ENCODE measurements at regions of chr2 and their contacts with region 1.

Region 1: DNA sequence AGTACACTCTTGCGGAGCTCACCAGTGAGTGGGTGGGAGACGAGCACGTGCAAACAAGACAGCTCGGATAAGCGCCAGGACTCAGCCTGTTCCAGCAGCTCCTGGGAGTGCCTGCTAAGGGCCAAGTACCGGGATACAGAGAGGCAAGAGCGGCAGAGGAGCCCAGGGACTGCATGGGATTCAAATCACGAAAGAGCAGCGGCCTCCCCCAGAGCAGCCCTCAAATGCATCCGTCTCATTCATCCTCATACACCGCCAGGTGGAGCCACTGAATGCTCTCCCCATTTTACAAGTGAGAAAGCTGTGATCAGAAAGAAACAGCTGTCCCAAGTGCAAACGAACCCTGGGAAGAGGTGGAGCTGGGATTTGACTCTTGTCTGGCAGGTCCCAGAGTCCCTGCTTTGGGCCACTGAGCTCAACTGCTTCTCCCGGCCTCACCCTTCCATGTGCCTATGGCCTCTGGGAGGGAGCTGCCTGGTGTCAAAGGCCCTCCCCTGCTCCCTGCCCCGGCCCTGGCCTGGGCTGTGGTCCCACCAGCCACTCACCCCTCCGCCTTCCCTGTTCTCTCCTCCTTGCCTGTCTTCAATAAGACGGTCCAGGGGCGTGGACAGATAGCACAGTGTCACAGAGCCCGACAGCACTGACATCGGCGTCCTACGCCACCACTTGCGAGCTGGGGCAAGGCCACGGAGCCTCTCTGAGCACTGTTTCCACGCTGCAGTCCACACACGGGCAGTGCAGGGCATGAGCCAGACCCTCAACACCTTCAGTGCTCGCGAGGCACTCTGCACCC is 72.8 kb upstream of the TAF1B start:
- DNase-seq: peak; percentile 65 to 84 (median 70)
- ATAC-seq: peak; percentile 38 to 60 (median 48)
- H3K4me3 ChIP-seq: peak overlapping the region in 4 of 12 donors; percentile 14 to 28 (median 20)
- H3K27ac ChIP-seq: peak overlapping the region in 10 of 12 donors; percentile 11 to 78 (median 74)
- H3K4me1 ChIP-seq: peaks cover 0 to 56% (median 23%) of the 10 kb centered on the region in 12 donors
- H3K27me3 ChIP-seq: no peaks in the 10 kb centered on the region
- CTCF ChIP-seq: peak; percentile 56 to 80 (median 72)
- POLR2A ChIP-seq: no peak

Region 2: GRCh38 chr2:8893978-8894820 is 876.3 kb before region 1 on chr2:
- intact Hi-C with region 1: no loop called
- DNase-seq: no peak
- ATAC-seq: no peak
- H3K4me3 ChIP-seq: no peak overlapping the region
- H3K27ac ChIP-seq: no peak overlapping the region
- H3K4me1 ChIP-seq: no peaks in the 10 kb centered on the region
- H3K27me3 ChIP-seq: no peaks in the 10 kb centered on the region
- CTCF ChIP-seq: no peak
- POLR2A ChIP-seq: no peak

Region 3: GRCh38 chr2:9474361-9474967 is 296.0 kb before region 1 on chr2 and contains the start of gene IAH1:
- intact Hi-C with region 1: loop called in 1 of 10 experiments (anchors 10 kb)
- DNase-seq: peak; percentile 60 to 86 (median 75)
- ATAC-seq: peak; percentile 57 to 93 (median 82)
- H3K4me3 ChIP-seq: peak within 1 kb of the TSS; percentile 59 to 93 (median 82)
- H3K27ac ChIP-seq: peak within 1 kb of the TSS; percentile 52 to 93 (median 84)
- H3K4me1 ChIP-seq: peaks cover 0 to 42% (median 32%) of the 10 kb centered on the region in 12 donors
- H3K27me3 ChIP-seq: no peaks in the 10 kb centered on the region
- CTCF ChIP-seq: peak in 2 of 12 donors; percentile 11 to 12
- POLR2A ChIP-seq: peak in 1 of 2 donors; percentile 65
- total RNA-seq, gene IAH1: 58.4 to 101 (median 78.0) TPM

Region 4: DNA sequence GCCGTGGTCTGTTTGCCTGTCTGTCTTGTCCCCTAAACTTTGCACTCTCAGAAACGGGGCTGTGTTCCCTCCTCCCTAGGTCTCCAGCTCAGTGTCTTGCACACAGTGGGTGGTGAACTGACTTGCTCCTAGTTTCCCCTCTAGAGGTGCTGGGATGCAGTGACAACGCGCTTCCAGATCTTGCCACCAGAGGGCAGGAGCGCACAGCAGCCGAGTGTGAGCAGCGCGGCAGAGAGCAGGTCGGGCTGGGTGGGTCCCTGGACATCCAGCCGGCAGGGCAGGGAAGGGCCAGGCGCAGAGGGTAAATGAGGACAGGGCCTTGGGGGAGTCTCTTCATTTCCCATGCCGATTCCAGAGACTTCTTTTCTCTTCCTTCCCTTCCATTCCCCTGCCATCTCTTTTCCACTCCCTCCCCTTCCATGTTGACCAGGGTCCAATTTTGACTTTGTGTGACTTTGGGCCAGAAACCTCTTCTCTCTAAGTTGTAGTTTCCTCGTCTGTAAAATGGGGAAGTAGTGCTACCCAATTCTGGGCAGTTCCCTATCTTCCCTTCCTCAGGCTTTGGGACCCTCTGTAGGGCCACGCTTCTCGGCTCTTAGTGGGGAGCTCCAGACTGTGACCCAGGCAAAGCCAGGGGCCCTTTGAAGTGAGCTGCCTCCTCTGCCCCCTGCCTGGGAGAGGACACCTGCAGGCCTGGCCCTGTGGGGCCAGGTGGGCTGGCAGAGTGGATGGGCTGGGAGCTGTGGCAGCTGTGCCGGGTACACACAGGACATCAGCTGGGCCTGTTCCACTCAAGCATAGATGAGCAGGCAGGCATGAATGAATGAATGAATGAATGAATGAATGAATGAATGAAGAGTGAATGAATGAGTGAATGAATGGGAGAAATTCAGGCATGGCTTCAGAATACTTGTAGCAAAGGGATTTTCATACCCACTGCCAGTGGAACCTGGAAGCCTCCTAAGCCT is 29.4 kb after region 1 on chr2:
- intact Hi-C with region 1: loop called in 1 of 10 experiments (anchors 2 kb)
- DNase-seq: peak; percentile 84 to 94 (median 88)
- ATAC-seq: peak; percentile 78 to 89 (median 80)
- H3K4me3 ChIP-seq: peak overlapping the region in 1 of 12 donors; percentile 12
- H3K27ac ChIP-seq: peak overlapping the region in 7 of 12 donors; percentile 18 to 67 (median 33)
- H3K4me1 ChIP-seq: peaks cover 0 to 52% (median 24%) of the 10 kb centered on the region in 12 donors
- H3K27me3 ChIP-seq: no peaks in the 10 kb centered on the region
- CTCF ChIP-seq: peak; percentile 92 to 99 (median 98)
- POLR2A ChIP-seq: no peak

Measured in heart left ventricle (tissue), 16 donors.